Activated CD4-positive, alpha-beta memory T cell treated with anti-CD3 and anti-CD28 coated beads for 36 hours (primary cell): ENCODE measurements at regions of chr10 and their contacts with region 1.

Region 1: DNA sequence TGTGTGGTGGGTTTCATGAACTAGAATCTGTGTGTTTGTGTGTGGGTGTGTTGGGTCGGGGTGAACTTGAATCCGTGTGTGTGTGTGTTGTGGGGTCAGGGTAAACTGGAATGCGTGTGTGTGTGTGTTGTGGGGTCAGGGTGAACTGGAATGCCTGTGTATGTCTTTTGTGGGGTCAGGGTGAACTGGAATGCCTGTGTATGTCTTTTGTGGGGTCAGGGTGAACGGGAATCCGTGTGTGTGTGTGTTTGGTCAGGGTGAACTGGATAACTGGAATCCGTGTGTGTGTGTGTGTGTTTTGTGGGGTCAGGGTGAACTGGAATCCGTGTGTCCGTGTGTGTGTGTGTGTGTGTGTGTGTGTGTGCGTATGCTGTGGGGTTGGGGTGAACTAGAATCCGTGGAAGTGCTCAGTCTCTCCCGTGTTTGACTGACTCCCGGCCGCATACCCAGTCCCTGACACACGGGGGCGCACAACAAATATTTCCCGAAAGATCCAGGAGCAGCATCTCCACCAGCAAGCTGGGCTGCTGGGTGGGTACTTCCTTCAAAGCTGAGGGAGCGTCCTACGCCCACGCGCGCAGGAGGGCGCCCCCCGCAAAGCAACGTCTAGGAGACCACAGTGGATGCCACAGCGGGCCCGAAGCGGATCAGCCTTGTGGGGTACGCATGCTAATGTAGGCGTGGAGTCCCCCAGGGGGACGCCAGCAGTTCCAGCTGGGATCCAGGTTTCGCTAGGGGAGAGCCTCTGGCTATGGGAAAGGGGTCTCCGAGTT is 836 bp upstream of the CASP7 start:
- DNase-seq: peak; percentile 83
- H3K4me3 Mint-ChIP-seq: peak overlapping the region; percentile 84
- H3K27ac Mint-ChIP-seq: peak overlapping the region; percentile 78
- H3K4me1 Mint-ChIP-seq: peaks cover 38% of the 10 kb centered on the region
- H3K27me3 Mint-ChIP-seq: peaks cover 3% of the 10 kb centered on the region

Region 2: DNA sequence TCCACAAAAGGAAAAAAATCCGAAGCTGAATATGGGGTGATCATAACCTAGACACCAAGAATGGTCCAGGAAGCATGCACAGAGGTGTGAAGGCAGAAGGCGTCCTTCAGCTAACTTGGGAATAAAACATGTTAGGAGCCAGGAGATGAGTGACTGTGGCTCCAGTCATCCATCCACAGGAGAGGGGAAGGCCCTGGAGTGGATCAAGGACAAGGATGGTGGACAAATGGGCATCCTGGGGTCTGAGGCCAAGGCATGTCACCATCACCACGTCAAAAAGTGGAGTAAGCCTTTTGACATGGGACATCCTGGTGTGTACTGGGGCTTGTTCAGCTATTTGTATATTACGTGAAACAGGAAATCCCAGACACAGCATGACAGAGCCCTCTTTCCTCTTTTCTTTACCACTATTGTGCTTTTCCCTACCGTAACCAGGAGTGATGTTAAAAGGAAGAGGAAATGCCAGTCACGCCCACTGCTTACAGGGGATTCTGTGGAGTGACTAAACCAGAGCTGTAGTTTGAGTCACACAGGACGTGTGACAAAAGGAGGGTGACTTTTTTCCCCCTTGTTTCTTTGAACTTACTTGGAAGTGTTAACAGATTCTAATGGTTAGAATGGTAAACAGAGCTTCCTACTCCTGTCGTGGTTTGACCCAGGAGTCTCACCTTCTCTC is 1289.6 kb before region 1 on chr10:
- CTCF ChIA-PET with region 1: no interaction called
- POLR2A ChIA-PET with region 1: no interaction called
- intact Hi-C with region 1: loop called (anchors 10 kb)
- DNase-seq: peak; percentile 80
- H3K4me3 Mint-ChIP-seq: peak overlapping the region; percentile 1
- H3K27ac Mint-ChIP-seq: peak overlapping the region; percentile 88
- H3K4me1 Mint-ChIP-seq: peaks cover 58% of the 10 kb centered on the region
- H3K27me3 Mint-ChIP-seq: no peaks in the 10 kb centered on the region

Region 3: DNA sequence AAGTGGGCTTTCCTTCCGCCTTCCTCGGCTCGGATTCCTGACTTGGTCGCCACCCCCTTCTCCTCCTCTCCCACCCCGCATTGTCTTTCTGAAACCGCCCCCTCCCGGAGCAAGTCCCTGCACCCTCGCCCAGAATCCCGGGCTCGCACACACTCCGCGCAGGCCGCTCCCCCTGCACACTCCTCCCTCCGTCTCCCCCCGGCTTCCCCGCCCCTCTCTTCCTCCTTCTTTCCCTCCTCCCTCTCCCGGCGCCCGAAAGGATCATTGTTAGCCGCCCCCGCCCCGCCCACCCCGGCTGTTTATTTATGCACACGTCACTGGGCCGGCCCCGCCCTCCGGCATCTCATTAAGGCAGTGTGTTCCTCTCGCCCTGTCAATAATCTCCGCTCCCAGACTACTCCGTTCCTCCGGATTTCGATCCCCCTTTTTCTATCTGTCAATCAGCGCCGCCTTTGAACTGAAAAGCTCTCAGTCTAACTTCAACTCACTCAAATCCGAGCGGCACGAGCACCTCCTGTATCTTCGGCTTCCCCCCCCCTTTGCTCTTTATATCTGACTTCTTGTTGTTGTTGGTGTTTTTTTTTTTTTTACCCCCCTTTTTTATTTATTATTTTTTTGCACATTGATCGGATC is 728.9 kb before region 1 on chr10 and contains the start of gene TCF7L2:
- CTCF ChIA-PET with region 1: no interaction called
- POLR2A ChIA-PET with region 1: no interaction called
- intact Hi-C with region 1: loop called (anchors 10 kb)
- DNase-seq: peak; percentile 61
- H3K4me3 Mint-ChIP-seq: peak within 1 kb of the TSS; percentile 85
- H3K27ac Mint-ChIP-seq: no peak within 1 kb of the TSS
- H3K4me1 Mint-ChIP-seq: peaks cover 23% of the 10 kb centered on the region
- H3K27me3 Mint-ChIP-seq: peaks cover 36% of the 10 kb centered on the region
- total RNA-seq, gene TCF7L2: 0.71 to 1.5 TPM

Region 4: GRCh38 chr10:113854011-113854760 is 175.3 kb after region 1 on chr10 and contains the starts of genes DCLRE1A and NHLRC2:
- CTCF ChIA-PET with region 1: no interaction called
- POLR2A ChIA-PET with region 1: no interaction called
- intact Hi-C with region 1: loop called (anchors 1 kb)
- DNase-seq: peak; percentile 76
- H3K4me3 Mint-ChIP-seq: peak within 1 kb of the TSS; percentile 87
- H3K27ac Mint-ChIP-seq: peak within 1 kb of the TSS; percentile 96
- H3K4me1 Mint-ChIP-seq: peaks cover 42% of the 10 kb centered on the region
- H3K27me3 Mint-ChIP-seq: no peaks in the 10 kb centered on the region
- total RNA-seq, gene DCLRE1A: 13.8 to 16.6 TPM
- total RNA-seq, gene NHLRC2: 21.8 to 23.7 TPM

Region 5: GRCh38 chr10:114083040-114083439 is 404.2 kb after region 1 on chr10:
- CTCF ChIA-PET with region 1: no interaction called
- POLR2A ChIA-PET with region 1: no interaction called
- intact Hi-C with region 1: loop called (anchors 2 kb)
- DNase-seq: peak; percentile 31
- H3K4me3 Mint-ChIP-seq: no peak overlapping the region
- H3K27ac Mint-ChIP-seq: no peak overlapping the region
- H3K4me1 Mint-ChIP-seq: no peaks in the 10 kb centered on the region
- H3K27me3 Mint-ChIP-seq: no peaks in the 10 kb centered on the region

Region 6: GRCh38 chr10:114526504-114527238 is 847.8 kb after region 1 on chr10:
- CTCF ChIA-PET with region 1: no interaction called
- POLR2A ChIA-PET with region 1: no interaction called
- intact Hi-C with region 1: loop called (anchors 5 kb)
- DNase-seq: peak; percentile 94
- H3K4me3 Mint-ChIP-seq: peak overlapping the region; percentile 93
- H3K27ac Mint-ChIP-seq: peak overlapping the region; percentile 95
- H3K4me1 Mint-ChIP-seq: peaks cover 43% of the 10 kb centered on the region
- H3K27me3 Mint-ChIP-seq: no peaks in the 10 kb centered on the region

Region 7: DNA sequence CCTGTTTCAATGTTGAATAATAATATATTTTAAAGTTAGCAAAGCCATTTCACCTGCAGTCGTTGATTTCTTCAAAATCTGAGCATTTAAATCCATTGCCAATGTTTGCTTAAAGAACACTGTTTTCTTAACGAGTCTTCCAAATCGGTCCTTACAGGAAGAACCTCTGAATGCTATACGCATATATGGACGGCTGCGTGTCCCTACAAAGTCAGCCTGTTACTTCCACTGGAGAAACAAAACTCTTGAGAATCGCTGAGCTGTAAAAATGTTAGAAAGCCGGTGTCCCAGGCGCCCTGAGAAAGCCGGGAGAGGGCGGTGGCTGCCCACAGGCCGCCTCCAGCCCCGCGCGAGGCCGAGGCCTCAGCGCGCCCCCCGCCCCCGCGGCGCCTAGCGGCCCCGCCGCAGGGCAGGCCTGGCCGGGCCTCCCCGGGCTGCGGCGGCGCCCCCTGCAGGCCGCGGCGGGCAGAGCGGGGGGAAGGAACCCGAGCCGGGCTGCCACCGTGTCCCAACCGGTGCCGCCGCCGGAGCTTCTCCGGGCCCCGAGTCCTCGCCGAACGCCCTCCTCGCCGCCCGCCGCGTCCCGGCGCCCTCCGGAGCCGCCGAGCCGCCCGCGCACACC is 1142.5 kb after region 1 on chr10 and contains the start of gene FHIP2A:
- CTCF ChIA-PET with region 1: interaction called, 3 read pairs
- POLR2A ChIA-PET with region 1: no interaction called
- intact Hi-C with region 1: loop called (anchors 10 kb)
- DNase-seq: peak; percentile 86
- H3K4me3 Mint-ChIP-seq: peak within 1 kb of the TSS; percentile 82
- H3K27ac Mint-ChIP-seq: peak within 1 kb of the TSS; percentile 86
- H3K4me1 Mint-ChIP-seq: peaks cover 31% of the 10 kb centered on the region
- H3K27me3 Mint-ChIP-seq: no peaks in the 10 kb centered on the region
- total RNA-seq, gene FHIP2A: 17.2 to 21.4 TPM